ENCODE measurements at regions of chr6 and their contacts with region 1.

Region 1: GRCh38 chr6:15184441-15184861 is 61.4 kb upstream of the JARID2 start:
- DNase-seq: peak; percentile 15
- H3K4me3 ChIP-seq: no peak overlapping the region
- H3K27ac ChIP-seq: peak overlapping the region; percentile 65
- H3K4me1 ChIP-seq: peaks cover 7% of the 10 kb centered on the region
- H3K27me3 ChIP-seq: no peaks in the 10 kb centered on the region
- CTCF ChIP-seq: no peak

Region 2: DNA sequence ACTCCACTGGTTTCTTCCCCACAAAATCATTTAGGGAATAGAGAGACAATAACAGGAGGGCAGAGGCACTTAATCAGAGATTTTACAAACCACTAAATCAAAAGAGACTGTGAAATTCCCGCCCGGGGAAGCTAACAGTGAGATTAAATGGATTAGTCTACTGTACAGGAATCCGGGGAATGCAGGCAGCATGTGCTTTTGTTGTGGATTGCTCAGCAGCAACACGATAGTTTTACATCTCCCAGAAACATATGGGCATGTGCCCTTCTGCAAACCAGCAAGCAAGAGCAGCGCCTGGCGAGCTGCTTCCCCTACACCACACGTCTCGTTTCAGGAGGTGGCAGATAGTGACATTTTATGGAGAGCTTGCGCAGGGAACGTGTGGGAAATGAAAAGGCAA is 684.6 kb before region 1 on chr6:
- CTCF ChIA-PET with region 1: no interaction called
- POLR2A ChIA-PET with region 1: interaction called, 37 read pairs
- intact Hi-C with region 1: no loop called
- DNase-seq: peak; percentile 90
- H3K4me3 ChIP-seq: no peak overlapping the region
- H3K27ac ChIP-seq: peak overlapping the region; percentile 15
- H3K4me1 ChIP-seq: peaks cover 27% of the 10 kb centered on the region
- H3K27me3 ChIP-seq: no peaks in the 10 kb centered on the region
- CTCF ChIP-seq: 0 out of 2 replicates have a peak, but pooled peaks have one; percentile 18

Region 3: GRCh38 chr6:14784596-14785492 is 399.6 kb before region 1 on chr6:
- CTCF ChIA-PET with region 1: no interaction called
- POLR2A ChIA-PET with region 1: no interaction called
- intact Hi-C with region 1: no loop called
- DNase-seq: no peak
- H3K4me3 ChIP-seq: no peak overlapping the region
- H3K27ac ChIP-seq: no peak overlapping the region
- H3K4me1 ChIP-seq: peaks cover 24% of the 10 kb centered on the region
- H3K27me3 ChIP-seq: no peaks in the 10 kb centered on the region
- CTCF ChIP-seq: no peak

Region 4: DNA sequence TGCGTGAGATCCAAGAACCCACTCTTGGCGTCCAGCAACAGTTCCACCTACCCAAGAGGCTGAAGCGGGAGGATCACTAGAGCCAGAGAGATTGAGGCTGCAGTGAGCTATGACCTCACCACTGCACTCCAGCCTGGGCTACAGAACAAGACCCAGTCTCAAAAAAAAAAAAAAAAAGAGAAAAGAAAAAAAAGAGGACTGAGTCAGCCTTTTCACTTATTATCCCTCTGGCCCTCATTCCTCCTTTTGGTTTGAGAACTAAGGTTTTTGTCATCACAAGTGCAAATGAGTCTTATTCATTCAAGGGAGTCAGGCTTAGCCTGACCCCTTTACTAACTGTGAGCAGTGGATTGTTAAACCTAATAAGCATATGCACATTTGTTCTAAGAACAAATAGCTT is 23.5 kb after region 1 on chr6:
- CTCF ChIA-PET with region 1: no interaction called
- POLR2A ChIA-PET with region 1: interaction called, 11 read pairs
- intact Hi-C with region 1: no loop called
- DNase-seq: no peak
- H3K4me3 ChIP-seq: no peak overlapping the region
- H3K27ac ChIP-seq: no peak overlapping the region
- H3K4me1 ChIP-seq: no peaks in the 10 kb centered on the region
- H3K27me3 ChIP-seq: no peaks in the 10 kb centered on the region
- CTCF ChIP-seq: no peak

Region 5: GRCh38 chr6:15439410-15440025 is 255.1 kb after region 1 on chr6:
- CTCF ChIA-PET with region 1: interaction called, 3 read pairs
- POLR2A ChIA-PET with region 1: no interaction called
- intact Hi-C with region 1: loop called (anchors 2 kb)
- DNase-seq: peak; percentile 98
- H3K4me3 ChIP-seq: no peak overlapping the region
- H3K27ac ChIP-seq: peak overlapping the region; percentile 20
- H3K4me1 ChIP-seq: peaks cover 81% of the 10 kb centered on the region
- H3K27me3 ChIP-seq: peaks cover 20% of the 10 kb centered on the region
- CTCF ChIP-seq: no peak

Region 6: GRCh38 chr6:15476631-15477380 is 292.4 kb after region 1 on chr6:
- CTCF ChIA-PET with region 1: no interaction called
- POLR2A ChIA-PET with region 1: interaction called, 10 read pairs
- intact Hi-C with region 1: no loop called
- DNase-seq: peak; percentile 42
- H3K4me3 ChIP-seq: no peak overlapping the region
- H3K27ac ChIP-seq: no peak overlapping the region
- H3K4me1 ChIP-seq: peaks cover 54% of the 10 kb centered on the region
- H3K27me3 ChIP-seq: no peaks in the 10 kb centered on the region
- CTCF ChIP-seq: no peak

Measured in A673 (cell line).